Natural killer cell (primary cell): ENCODE measurements at regions of chr2 and their contacts with region 1.

Region 1: DNA sequence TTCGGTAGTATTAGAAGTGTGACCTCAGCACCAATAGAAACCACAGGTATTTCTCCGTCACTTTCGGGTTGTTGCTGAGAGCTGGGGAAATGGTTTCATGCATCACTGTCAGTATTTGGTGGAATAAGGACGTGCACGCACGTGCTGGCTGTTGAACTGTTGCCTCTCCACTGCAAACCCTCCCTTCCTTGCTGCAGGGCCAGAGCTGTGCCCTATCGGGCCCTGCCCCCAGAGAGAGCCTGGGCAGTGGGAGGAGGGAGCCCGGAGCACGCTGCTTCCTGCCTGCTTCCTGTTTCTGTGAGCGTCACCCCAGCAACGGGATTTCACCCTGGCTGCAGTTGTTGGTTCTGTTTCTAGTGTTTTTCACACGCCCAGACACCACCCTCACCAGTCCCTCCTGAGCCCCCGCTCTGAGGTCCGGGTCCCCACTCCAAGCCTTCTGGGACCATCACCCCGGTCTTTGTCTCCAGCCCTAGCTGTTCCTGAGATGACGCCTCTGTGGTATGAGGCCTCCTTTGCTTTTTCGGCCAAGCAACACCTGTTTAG is 47.4 kb downstream of the LRRFIP1 start:
- DNase-seq: peak; percentile 83 to 96
- ATAC-seq: peak; percentile 68 to 84 (median 74)
- H3K4me3 ChIP-seq: peak overlapping the region; percentile 22
- H3K4me3 Mint-ChIP-seq: peak overlapping the region; percentile 93
- H3K27ac ChIP-seq: peak overlapping the region; percentile 97
- H3K27ac Mint-ChIP-seq: peak overlapping the region; percentile 90 to 98
- H3K4me1 ChIP-seq: peaks cover 55% of the 10 kb centered on the region
- H3K4me1 Mint-ChIP-seq: peaks cover 50 to 59% of the 10 kb centered on the region in 2 donors
- H3K27me3 ChIP-seq: no peaks in the 10 kb centered on the region
- H3K27me3 Mint-ChIP-seq: no peaks in the 10 kb centered on the region
- CTCF ChIP-seq: no peak

Region 2: DNA sequence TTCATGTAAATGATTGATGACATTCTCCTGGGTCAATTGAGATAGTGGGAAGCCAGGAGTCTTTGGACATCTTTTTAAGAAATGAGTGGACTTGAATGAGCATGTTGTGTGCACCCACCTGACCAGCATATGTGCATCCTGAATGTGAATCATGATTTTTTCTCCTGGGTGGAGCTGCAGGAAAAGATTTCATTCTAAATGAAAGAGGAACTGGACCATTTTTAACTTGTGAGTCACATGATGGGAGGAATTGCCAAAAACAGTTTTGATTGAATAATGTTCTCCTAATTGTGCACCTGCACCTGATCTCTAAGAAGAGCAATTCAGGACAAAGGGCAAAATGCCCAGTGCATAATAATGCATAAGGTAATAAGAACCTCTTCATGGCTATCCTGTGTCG is 556.8 kb before region 1 on chr2:
- intact Hi-C with region 1: no loop called
- DNase-seq: no peak
- ATAC-seq: no peak
- H3K4me3 ChIP-seq: no peak overlapping the region
- H3K4me3 Mint-ChIP-seq: no peak overlapping the region
- H3K27ac ChIP-seq: no peak overlapping the region
- H3K27ac Mint-ChIP-seq: no peak overlapping the region
- H3K4me1 ChIP-seq: no peaks in the 10 kb centered on the region
- H3K4me1 Mint-ChIP-seq: no peaks in the 10 kb centered on the region
- H3K27me3 ChIP-seq: no peaks in the 10 kb centered on the region
- H3K27me3 Mint-ChIP-seq: no peaks in the 10 kb centered on the region
- CTCF ChIP-seq: no peak

Region 3: DNA sequence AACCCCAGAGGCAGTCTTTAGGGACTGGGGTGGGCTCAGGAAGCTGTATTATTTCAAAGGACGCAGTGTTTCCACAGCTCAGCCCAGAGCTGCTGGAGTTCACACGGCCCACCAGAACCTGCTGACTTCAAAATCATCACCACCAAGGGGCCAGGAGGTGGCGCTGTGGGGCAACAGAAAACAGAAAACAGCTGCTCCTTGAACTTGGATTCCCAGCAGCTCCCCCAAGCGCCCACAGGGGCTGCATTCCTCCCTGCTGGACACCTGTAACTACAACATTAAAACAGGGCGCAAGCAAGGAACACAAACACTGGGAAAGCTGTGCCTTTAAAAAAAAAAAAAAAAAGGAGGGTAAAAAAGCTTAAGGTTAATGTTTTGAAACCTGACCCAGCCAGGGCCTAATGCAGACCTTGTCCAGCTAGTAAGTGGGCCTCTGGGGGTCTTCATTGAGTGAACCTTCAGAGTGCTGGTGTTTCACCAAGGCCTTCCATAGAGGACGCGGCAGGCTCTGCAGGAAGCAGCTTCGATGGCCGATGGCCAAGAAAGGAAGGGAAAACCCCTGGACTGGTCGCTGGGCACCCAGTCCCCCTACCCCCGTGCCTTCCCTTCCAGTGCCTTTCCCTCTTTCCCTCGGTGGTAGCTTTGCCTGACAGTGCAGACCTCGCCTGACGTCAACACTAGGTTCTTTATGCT is 161.9 kb before region 1 on chr2:
- intact Hi-C with region 1: loop called (anchors 2 kb)
- DNase-seq: peak; percentile 72 to 88
- ATAC-seq: peak; percentile 70 to 86 (median 85)
- H3K4me3 ChIP-seq: no peak overlapping the region
- H3K4me3 Mint-ChIP-seq: no peak overlapping the region
- H3K27ac ChIP-seq: no peak overlapping the region
- H3K27ac Mint-ChIP-seq: no peak overlapping the region
- H3K4me1 ChIP-seq: no peaks in the 10 kb centered on the region
- H3K4me1 Mint-ChIP-seq: no peaks in the 10 kb centered on the region
- H3K27me3 ChIP-seq: no peaks in the 10 kb centered on the region
- H3K27me3 Mint-ChIP-seq: peaks cover 9 to 11% of the 10 kb centered on the region in 2 donors
- CTCF ChIP-seq: peak; percentile 78

Region 4: GRCh38 chr2:237686659-237687136 is 11.9 kb after region 1 on chr2:
- intact Hi-C with region 1: loop called (anchors 1 kb)
- DNase-seq: no peak
- ATAC-seq: no peak
- H3K4me3 ChIP-seq: no peak overlapping the region
- H3K4me3 Mint-ChIP-seq: peak overlapping the region; percentile 9
- H3K27ac ChIP-seq: peak overlapping the region; percentile 100
- H3K27ac Mint-ChIP-seq: peak overlapping the region; percentile 97 to 98
- H3K4me1 ChIP-seq: peaks cover 61% of the 10 kb centered on the region
- H3K4me1 Mint-ChIP-seq: peaks cover 58 to 65% of the 10 kb centered on the region in 2 donors
- H3K27me3 ChIP-seq: no peaks in the 10 kb centered on the region
- H3K27me3 Mint-ChIP-seq: no peaks in the 10 kb centered on the region
- CTCF ChIP-seq: no peak

Region 5: DNA sequence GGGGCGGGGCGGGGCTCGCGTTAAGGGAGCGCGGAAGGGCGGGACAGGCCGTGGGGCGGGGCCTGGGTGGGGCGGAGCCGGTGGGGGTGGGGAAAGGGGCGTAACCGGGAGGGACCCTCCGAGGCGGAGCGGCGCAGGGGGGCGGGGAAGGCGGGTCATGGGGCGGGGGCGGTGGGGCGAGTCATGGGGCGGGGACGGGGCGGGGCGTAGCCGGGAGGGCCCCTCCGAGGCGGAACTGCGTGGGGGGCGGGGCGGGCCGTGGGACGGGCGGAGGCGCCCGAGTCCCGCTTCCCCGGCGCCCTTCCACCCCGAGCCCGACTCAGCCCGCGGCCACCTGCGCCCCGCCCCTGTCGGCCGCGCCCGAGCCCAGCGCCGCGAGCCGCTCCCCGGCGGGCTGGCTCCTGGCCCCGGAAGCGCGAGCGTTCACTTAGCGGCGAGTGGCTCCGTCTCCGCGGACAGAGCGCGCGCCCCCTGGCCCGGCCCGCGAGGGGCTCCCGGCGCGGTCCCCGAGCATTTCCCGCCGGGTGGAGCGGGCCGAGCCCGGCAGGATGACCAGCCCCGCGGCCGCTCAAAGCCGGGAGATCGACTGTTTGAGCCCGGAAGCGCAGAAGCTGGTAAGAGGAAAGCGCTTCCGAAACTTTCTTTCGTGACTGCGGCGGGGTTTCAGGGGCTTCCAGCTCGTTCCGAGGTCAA is 17.2 kb after region 1 on chr2:
- intact Hi-C with region 1: loop called (anchors 1 kb)
- DNase-seq: peak; percentile 88 to 96
- ATAC-seq: peak; percentile 51 to 79 (median 67)
- H3K4me3 ChIP-seq: peak overlapping the region; percentile 87
- H3K4me3 Mint-ChIP-seq: peak overlapping the region; percentile 98
- H3K27ac ChIP-seq: peak overlapping the region; percentile 93
- H3K27ac Mint-ChIP-seq: peak overlapping the region; percentile 95 to 99
- H3K4me1 ChIP-seq: peaks cover 71% of the 10 kb centered on the region
- H3K4me1 Mint-ChIP-seq: peaks cover 74 to 80% of the 10 kb centered on the region in 2 donors
- H3K27me3 ChIP-seq: no peaks in the 10 kb centered on the region
- H3K27me3 Mint-ChIP-seq: no peaks in the 10 kb centered on the region
- CTCF ChIP-seq: no peak

Region 6: DNA sequence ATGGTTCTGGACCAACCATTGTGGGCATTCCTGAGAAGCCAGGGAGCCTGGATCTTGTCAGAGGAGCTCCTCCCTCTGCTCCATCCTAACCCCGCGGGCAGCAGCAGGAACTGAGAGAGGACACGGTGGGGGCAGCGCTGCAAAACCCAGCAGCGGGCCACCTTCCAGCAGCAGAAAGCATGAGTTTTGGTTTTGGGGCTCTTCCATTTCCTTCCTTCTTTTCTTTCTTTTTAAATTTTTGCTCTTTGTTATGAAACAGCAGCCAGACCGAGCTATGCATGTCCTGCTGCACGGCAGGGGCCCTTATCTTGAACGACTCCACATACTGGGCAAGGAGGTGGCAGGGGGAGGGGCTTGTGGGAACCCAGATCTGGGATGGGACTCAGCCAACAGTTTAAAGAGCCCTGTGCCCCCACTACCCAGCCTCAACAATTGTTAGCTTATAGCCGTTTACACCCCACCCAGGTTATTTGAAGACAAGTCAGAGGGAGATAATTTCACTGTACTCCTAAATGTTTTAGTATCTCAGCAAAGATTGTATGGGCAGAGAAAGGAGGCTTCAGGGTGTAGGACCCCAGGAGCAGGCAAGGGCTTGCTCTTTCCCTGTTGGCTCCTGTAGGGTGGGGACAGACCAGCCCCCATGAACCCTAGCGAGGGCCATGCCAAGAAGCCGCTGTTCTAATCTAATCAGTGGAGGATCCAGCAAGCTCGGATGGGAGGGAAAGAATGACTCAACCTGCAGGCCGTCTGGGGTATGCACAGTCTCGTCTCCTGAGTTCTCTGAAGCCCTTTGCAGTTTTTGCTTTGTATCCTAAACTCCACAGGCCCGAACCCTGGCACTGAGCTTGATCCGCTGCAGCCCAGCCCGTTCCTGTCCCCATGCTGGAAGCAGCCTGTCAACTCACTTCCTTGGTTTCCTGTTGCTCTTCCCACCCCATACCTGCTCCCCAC is 27.9 kb after region 1 on chr2:
- intact Hi-C with region 1: loop called (anchors 5 kb)
- DNase-seq: peak in 1 of 2 donors; percentile 50
- ATAC-seq: peak in 2 of 3 donors; percentile 8 to 24
- H3K4me3 ChIP-seq: peak overlapping the region; percentile 2
- H3K4me3 Mint-ChIP-seq: peak overlapping the region; percentile 70
- H3K27ac ChIP-seq: peak overlapping the region; percentile 8
- H3K27ac Mint-ChIP-seq: peak overlapping the region; percentile 86 to 99
- H3K4me1 ChIP-seq: peaks cover 95% of the 10 kb centered on the region
- H3K4me1 Mint-ChIP-seq: peaks cover 82 to 94% of the 10 kb centered on the region in 2 donors
- H3K27me3 ChIP-seq: no peaks in the 10 kb centered on the region
- H3K27me3 Mint-ChIP-seq: no peaks in the 10 kb centered on the region
- CTCF ChIP-seq: no peak

Region 7: DNA sequence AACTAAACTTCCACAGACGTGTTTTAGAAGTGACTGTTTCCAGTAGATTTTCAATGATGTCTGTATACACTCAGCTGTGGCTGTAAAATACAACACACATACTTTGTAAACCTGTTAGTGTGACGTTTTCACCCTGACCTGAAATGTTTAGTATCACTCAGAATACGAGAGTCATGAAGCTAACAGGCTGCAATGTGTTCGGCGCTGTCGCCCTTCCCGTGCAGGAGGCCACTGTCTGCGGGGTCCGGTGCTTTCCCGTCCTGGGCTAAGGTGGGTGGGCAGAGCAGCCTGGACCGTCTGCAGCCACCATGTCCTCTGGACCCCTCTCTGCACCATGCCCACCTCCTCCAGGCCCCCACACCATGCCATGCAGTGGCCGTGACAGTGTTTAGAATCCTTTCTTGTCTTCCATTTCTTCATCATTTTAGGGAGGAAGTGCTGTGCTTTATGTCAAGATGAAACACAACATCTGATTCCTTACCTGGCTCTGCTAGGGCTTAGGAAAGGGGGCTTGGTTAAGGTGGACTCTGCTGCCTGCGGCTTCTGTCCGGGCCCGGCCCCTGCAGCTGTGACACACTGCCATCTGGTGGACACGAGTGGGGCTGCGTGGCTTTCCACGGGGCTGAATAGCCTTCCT is 69.9 kb after region 1 on chr2:
- intact Hi-C with region 1: loop called (anchors 1 kb)
- DNase-seq: peak; percentile 75 to 86
- ATAC-seq: peak; percentile 77 to 89 (median 86)
- H3K4me3 ChIP-seq: no peak overlapping the region
- H3K4me3 Mint-ChIP-seq: no peak overlapping the region
- H3K27ac ChIP-seq: peak overlapping the region; percentile 31
- H3K27ac Mint-ChIP-seq: peak overlapping the region; percentile 76 to 86
- H3K4me1 ChIP-seq: peaks cover 13% of the 10 kb centered on the region
- H3K4me1 Mint-ChIP-seq: peaks cover 30 to 40% of the 10 kb centered on the region in 2 donors
- H3K27me3 ChIP-seq: no peaks in the 10 kb centered on the region
- H3K27me3 Mint-ChIP-seq: no peaks in the 10 kb centered on the region
- CTCF ChIP-seq: peak; percentile 98

Region 8: DNA sequence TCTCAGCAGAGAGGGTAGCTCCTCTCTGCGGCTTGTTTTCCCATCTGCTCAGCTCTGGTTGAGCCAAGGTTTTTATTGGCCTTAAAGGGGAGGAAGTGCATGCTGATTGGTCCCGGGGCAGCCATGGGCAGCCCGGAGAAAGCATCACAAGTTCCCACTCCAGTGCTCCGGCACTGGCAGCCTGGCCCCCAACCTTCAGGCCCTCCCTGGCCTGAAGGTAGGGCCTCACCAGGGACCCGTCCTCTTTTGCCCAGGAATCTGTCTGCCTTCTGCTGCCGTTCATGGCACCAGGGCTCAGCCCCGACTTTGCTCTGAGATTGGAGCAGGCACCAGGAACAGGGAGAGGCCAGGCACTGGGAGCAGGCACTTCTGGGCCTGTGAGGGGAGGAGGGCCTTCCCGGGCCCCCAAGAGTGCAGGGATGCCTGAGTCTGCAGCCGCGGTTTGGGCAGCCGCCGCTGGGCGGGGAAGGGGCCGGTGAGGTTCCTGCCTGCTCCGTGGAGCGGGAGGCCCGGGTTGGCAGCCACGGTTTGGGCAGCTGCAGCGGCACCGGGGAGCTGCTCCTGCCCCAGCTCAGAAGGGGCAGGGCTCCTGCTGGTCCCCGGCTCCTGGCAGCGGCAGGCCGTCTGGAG is 546.2 kb after region 1 on chr2:
- intact Hi-C with region 1: no loop called
- DNase-seq: peak in 1 of 2 donors; percentile 28
- ATAC-seq: peak in 1 of 3 donors; percentile 82
- H3K4me3 ChIP-seq: no peak overlapping the region
- H3K4me3 Mint-ChIP-seq: no peak overlapping the region
- H3K27ac ChIP-seq: no peak overlapping the region
- H3K27ac Mint-ChIP-seq: peak overlapping the region in 1 of 2 donors; percentile 48
- H3K4me1 ChIP-seq: no peaks in the 10 kb centered on the region
- H3K4me1 Mint-ChIP-seq: no peaks in the 10 kb centered on the region
- H3K27me3 ChIP-seq: no peaks in the 10 kb centered on the region
- H3K27me3 Mint-ChIP-seq: no peaks in the 10 kb centered on the region
- CTCF ChIP-seq: no peak

Region 9: GRCh38 chr2:238288650-238289573 is 614.1 kb after region 1 on chr2:
- intact Hi-C with region 1: loop called (anchors 2 kb)
- DNase-seq: peak; percentile 98 to 99
- ATAC-seq: peak; percentile 73 to 91 (median 83)
- H3K4me3 ChIP-seq: peak overlapping the region; percentile 45
- H3K4me3 Mint-ChIP-seq: peak overlapping the region; percentile 99
- H3K27ac ChIP-seq: peak overlapping the region; percentile 86
- H3K27ac Mint-ChIP-seq: peak overlapping the region; percentile 98 to 99
- H3K4me1 ChIP-seq: peaks cover 35% of the 10 kb centered on the region
- H3K4me1 Mint-ChIP-seq: peaks cover 41 to 46% of the 10 kb centered on the region in 2 donors
- H3K27me3 ChIP-seq: no peaks in the 10 kb centered on the region
- H3K27me3 Mint-ChIP-seq: no peaks in the 10 kb centered on the region
- CTCF ChIP-seq: no peak

Region 10: GRCh38 chr2:239015218-239015900 is 1340.6 kb after region 1 on chr2:
- intact Hi-C with region 1: no loop called
- DNase-seq: no peak
- ATAC-seq: no peak
- H3K4me3 ChIP-seq: no peak overlapping the region
- H3K4me3 Mint-ChIP-seq: no peak overlapping the region
- H3K27ac ChIP-seq: no peak overlapping the region
- H3K27ac Mint-ChIP-seq: no peak overlapping the region
- H3K4me1 ChIP-seq: no peaks in the 10 kb centered on the region
- H3K4me1 Mint-ChIP-seq: no peaks in the 10 kb centered on the region
- H3K27me3 ChIP-seq: no peaks in the 10 kb centered on the region
- H3K27me3 Mint-ChIP-seq: peaks cover 2 to 6% of the 10 kb centered on the region in 2 donors
- CTCF ChIP-seq: no peak